ENCODE measurements at regions of chr3 and their contacts with region 1.

Region 1: DNA sequence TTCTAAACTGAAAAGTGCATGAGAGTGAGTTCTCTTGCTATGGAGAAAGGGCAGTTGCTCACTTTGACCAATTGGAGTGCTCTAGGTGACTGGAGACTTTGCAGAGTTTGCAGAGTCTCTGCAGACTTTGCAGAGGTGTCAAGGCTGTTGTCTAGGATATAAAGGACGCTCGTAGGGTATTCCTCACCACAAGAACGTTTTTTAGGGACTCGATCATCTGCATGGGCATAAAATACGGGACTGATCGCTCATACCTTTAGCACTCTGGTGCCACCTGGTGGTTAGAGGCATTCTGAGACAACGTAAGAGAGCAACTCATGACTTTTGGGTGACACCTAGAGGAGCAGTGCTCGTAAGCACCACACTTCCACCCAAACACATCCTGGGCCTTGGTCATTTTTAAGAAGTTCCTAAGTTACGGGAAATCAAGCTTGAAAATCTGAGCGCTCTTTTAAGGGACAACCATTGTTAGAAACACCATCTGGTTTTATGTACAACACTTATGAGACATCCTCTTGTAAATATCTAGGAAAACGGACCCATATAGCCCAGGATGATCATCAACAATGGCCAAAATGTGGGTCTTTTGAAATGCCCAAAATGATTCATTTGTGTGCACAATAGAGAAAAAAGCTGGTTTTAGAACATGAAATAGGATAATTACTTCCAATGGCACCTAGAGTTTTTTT is 51.6 kb upstream of the XCR1 start:
- DNase-seq: peak; percentile 90
- H3K4me3 Mint-ChIP-seq: no peak overlapping the region
- H3K27ac Mint-ChIP-seq: peak overlapping the region; percentile 2
- H3K4me1 Mint-ChIP-seq: peaks cover 13% of the 10 kb centered on the region
- H3K27me3 Mint-ChIP-seq: peaks cover 15% of the 10 kb centered on the region

Region 2: DNA sequence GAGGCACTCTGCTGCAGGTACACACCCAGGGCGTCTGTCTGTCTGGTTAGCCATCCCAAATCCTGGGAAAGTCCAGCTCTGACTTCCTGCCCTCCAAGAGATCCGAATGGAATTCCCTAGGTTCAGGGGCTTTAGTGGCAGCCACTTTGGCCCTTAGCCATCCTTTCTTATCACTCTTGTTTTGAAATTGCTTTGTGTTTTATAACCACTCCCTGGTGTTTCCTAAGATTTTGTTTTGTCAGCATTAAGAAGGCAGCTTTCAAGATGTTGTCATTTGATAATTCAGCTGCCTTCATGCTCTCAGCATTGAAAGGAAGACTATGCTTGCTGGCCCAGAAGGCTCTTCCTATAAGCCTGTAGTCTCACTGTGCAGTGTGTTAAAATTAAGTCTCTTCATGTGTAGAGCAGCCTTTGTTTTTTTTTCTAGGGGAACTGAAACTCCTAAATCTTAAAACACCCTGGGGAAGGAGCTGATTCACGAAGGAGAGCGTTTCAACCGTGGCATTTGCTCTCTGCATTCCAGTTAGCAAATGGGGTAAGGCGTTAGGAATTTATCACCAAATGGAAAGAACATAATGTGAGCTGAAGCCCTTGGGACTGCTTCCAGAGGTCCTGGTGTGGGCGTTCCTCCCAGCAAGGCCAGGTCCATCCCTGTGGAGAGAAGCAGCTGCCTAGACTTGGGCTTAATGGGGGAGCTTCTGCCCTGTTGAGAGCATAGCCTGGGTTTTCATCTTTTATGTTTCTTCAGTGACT is 1066.9 kb before region 1 on chr3:
- CTCF ChIA-PET with region 1: no interaction called
- POLR2A ChIA-PET with region 1: no interaction called
- intact Hi-C with region 1: no loop called
- DNase-seq: no peak
- H3K4me3 Mint-ChIP-seq: no peak overlapping the region
- H3K27ac Mint-ChIP-seq: no peak overlapping the region
- H3K4me1 Mint-ChIP-seq: peaks cover 19% of the 10 kb centered on the region
- H3K27me3 Mint-ChIP-seq: no peaks in the 10 kb centered on the region

Region 3: GRCh38 chr3:45864760-45865519 is 213.9 kb before region 1 on chr3:
- CTCF ChIA-PET with region 1: interaction called, 3 read pairs
- POLR2A ChIA-PET with region 1: no interaction called
- intact Hi-C with region 1: loop called (anchors 5 kb)
- DNase-seq: peak; percentile 50
- H3K4me3 Mint-ChIP-seq: no peak overlapping the region
- H3K27ac Mint-ChIP-seq: no peak overlapping the region
- H3K4me1 Mint-ChIP-seq: peaks cover 51% of the 10 kb centered on the region
- H3K27me3 Mint-ChIP-seq: peaks cover 60% of the 10 kb centered on the region

Region 4: GRCh38 chr3:45938864-45939263 is 140.0 kb before region 1 on chr3:
- CTCF ChIA-PET with region 1: interaction called, 445 read pairs
- POLR2A ChIA-PET with region 1: interaction called, 5 read pairs
- intact Hi-C with region 1: loop called (anchors 1 kb)
- DNase-seq: peak; percentile 91
- H3K4me3 Mint-ChIP-seq: no peak overlapping the region
- H3K27ac Mint-ChIP-seq: no peak overlapping the region
- H3K4me1 Mint-ChIP-seq: peaks cover 34% of the 10 kb centered on the region
- H3K27me3 Mint-ChIP-seq: peaks cover 2% of the 10 kb centered on the region

Region 5: DNA sequence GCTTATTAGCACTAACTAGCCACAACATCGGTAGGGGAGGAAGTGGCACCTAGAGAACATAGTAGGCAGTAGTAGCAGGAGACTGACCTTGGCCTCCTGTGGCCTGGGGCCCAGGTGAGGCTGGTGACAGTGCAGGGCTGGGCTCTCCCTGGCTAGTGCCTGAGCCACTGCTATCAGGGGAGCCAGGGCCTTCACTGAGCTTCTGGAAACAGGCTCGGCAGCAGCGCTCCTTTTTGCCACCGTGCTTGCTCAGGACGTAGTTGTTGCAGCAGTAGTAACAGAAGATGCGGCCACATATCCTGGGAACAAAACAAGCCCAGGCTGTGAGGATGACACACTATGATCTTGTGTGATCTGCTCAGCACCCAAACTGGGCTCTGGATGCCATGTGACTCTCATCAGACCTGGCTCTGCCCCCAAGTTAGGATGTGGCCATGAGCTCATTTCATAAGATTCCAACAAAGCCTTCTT is 120.5 kb before region 1 on chr3:
- CTCF ChIA-PET with region 1: interaction called, 93 read pairs
- POLR2A ChIA-PET with region 1: no interaction called
- intact Hi-C with region 1: no loop called
- DNase-seq: no peak
- H3K4me3 Mint-ChIP-seq: no peak overlapping the region
- H3K27ac Mint-ChIP-seq: no peak overlapping the region
- H3K4me1 Mint-ChIP-seq: peaks cover 28% of the 10 kb centered on the region
- H3K27me3 Mint-ChIP-seq: no peaks in the 10 kb centered on the region

Region 6: GRCh38 chr3:45995236-45996192 is 83.3 kb before region 1 on chr3 and contains the start of gene FYCO1:
- CTCF ChIA-PET with region 1: interaction called, 19 read pairs
- POLR2A ChIA-PET with region 1: no interaction called
- intact Hi-C with region 1: no loop called
- DNase-seq: peak; percentile 93
- H3K4me3 Mint-ChIP-seq: peak within 1 kb of the TSS; percentile 85
- H3K27ac Mint-ChIP-seq: peak within 1 kb of the TSS; percentile 87
- H3K4me1 Mint-ChIP-seq: peaks cover 44% of the 10 kb centered on the region
- H3K27me3 Mint-ChIP-seq: no peaks in the 10 kb centered on the region
- total RNA-seq, gene FYCO1: 13.7 to 14.0 TPM

Region 7: DNA sequence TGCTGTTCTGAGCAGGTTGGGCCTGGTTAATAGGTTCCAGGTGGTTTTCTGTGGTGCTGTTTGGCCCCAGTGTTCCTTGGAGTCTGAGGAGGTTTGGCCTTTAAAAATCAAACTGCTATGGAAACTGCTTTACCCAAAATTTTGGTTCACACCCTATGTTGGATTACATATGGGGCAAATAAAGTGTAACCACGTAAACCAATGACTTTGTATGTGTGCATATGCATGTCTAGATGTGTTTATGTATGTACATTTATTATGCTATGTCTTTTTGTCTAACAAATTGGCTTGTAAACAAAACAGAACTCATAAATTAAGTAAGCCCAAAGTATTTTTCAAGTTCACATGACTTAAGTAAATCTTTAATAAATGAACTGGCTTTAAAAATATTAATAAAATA is 42.7 kb before region 1 on chr3:
- CTCF ChIA-PET with region 1: no interaction called
- POLR2A ChIA-PET with region 1: no interaction called
- intact Hi-C with region 1: no loop called
- DNase-seq: no peak
- H3K4me3 Mint-ChIP-seq: no peak overlapping the region
- H3K27ac Mint-ChIP-seq: no peak overlapping the region
- H3K4me1 Mint-ChIP-seq: no peaks in the 10 kb centered on the region
- H3K27me3 Mint-ChIP-seq: no peaks in the 10 kb centered on the region

Region 8: DNA sequence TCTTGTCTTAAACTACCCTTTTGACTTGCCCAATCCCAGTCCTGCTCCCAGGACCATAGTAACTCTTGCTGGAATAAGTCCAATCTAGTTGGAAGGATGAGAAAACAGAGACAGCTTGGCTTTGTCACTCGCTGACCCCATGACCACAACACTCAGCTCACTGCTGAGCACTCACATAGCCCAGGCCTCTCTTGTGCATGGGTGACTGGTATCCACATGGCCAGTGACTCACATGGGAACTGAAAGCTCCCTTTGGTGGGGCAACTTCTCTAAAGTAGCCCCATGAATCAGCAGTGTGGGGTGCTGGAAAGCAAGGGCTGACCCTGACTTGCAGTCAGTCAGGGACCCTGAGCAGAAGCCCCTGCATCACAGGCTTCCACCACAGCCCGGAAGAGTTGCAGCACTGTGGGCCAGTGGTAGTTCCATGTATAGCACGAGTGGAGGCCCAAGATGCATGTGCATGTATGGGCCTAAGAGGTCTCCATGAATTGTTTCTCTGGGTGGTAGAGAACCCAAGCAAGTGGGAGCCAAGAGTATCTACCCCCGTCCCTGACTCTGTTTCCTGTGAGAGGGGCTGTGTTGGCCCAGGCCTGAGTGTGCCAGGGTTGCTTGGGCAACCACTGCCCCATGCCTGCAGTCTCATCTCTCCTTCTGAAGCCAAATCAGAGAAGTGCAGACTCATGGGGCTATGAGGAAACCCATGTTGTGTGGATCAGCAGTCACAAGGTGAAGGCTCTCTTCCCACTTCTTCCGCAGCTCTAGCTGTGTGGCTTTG is 10.6 kb after region 1 on chr3:
- CTCF ChIA-PET with region 1: interaction called, 43 read pairs
- POLR2A ChIA-PET with region 1: no interaction called
- intact Hi-C with region 1: no loop called
- DNase-seq: peak; percentile 65
- H3K4me3 Mint-ChIP-seq: no peak overlapping the region
- H3K27ac Mint-ChIP-seq: no peak overlapping the region
- H3K4me1 Mint-ChIP-seq: peaks cover 19% of the 10 kb centered on the region
- H3K27me3 Mint-ChIP-seq: peaks cover 33% of the 10 kb centered on the region

Region 9: DNA sequence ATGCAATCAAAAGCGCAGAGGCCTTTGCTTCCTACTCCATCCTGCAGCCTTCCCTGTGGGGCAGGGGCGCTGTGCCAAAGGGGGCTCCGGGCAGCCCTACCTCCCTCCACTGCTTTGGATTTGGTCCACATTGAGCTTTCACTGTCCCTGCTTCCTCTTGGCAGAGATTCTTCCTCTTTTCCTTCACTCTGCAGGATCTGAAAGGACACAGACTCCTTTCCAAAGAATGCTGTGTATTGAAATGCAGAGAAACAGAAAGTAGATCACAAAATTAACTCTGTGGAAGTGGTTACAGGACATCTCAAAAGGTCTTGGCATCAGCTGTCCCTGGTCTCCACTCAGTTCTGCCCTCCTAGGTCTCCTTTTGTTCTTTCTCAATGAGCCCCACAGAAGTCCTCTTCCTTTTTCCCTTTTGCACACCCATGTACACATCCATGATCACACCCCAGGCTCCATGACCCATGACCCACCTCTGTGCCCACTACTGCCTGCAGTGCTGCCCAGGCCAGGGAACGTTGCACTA is 65.2 kb after region 1 on chr3:
- CTCF ChIA-PET with region 1: no interaction called
- POLR2A ChIA-PET with region 1: no interaction called
- intact Hi-C with region 1: no loop called
- DNase-seq: no peak
- H3K4me3 Mint-ChIP-seq: no peak overlapping the region
- H3K27ac Mint-ChIP-seq: no peak overlapping the region
- H3K4me1 Mint-ChIP-seq: peaks cover 14% of the 10 kb centered on the region
- H3K27me3 Mint-ChIP-seq: no peaks in the 10 kb centered on the region